ENCODE measurements at regions of chr10 and their contacts with region 1.

Region 1: GRCh38 chr10:102503281-102504220 is at the start of gene SUFU:
- DNase-seq: peak; percentile 99
- ATAC-seq: peak; percentile 74
- H3K4me3 Mint-ChIP-seq: no peak within 1 kb of the TSS
- H3K27ac Mint-ChIP-seq: peak within 1 kb of the TSS; percentile 83
- H3K4me1 Mint-ChIP-seq: peaks cover 29% of the 10 kb centered on the region
- H3K27me3 Mint-ChIP-seq: no peaks in the 10 kb centered on the region
- total RNA-seq, gene SUFU: 10.6 to 12.0 TPM

Region 2: DNA sequence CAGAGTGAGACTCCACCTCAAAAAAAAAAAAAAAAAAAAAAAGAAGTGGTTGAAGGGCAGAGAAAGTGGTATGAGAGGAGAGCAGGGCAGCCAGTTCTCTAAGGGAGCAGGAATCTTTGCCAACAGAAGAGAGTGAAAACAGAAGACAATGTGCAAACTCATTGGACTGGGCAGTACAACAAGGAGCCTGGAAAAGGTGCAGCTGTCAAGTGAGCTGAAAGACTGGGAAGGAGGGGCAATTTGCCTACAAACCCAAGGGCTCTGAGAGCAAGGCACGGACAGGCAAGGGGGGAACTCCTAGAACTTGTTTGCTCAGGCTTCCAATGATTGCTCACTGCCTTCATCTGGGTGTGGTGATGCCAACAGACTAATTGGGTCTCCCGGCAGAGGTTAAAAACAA is 10.6 kb before region 1 on chr10:
- CTCF ChIA-PET with region 1: no interaction called
- POLR2A ChIA-PET with region 1: no interaction called
- DNase-seq: no peak
- ATAC-seq: no peak
- H3K4me3 Mint-ChIP-seq: no peak overlapping the region
- H3K27ac Mint-ChIP-seq: peak overlapping the region; percentile 47
- H3K4me1 Mint-ChIP-seq: peaks cover 11% of the 10 kb centered on the region
- H3K27me3 Mint-ChIP-seq: no peaks in the 10 kb centered on the region

Region 3: GRCh38 chr10:102523250-102524029 is 19.9 kb after region 1 on chr10:
- CTCF ChIA-PET with region 1: interaction called, 11 read pairs
- POLR2A ChIA-PET with region 1: interaction called, 3 read pairs
- DNase-seq: no peak
- ATAC-seq: no peak
- H3K4me3 Mint-ChIP-seq: no peak overlapping the region
- H3K27ac Mint-ChIP-seq: no peak overlapping the region
- H3K4me1 Mint-ChIP-seq: peaks cover 9% of the 10 kb centered on the region
- H3K27me3 Mint-ChIP-seq: no peaks in the 10 kb centered on the region

Region 4: DNA sequence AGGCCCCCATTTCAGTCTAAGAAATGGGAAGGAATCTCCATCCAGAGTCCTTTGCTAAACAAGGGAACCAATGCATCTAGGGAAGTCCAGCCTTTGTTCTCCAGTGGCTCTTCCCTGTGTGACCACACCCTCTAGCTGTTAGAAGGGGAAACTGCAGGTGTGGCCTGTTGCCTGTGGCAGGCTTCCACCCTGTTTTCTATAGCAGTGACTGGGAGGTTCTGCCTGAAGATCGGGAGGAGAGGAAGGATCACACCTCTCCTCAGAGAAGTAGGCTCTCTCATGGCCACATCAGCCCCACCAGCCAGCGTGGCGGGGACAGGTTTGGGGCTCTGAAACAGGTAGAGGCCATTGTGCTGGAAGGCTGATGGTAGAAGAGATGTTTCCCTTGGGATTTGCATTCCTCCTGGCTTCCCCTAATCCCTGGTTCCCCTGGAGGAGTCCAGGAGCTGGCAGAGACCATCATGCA is 93.0 kb after region 1 on chr10:
- CTCF ChIA-PET with region 1: interaction called, 18 read pairs
- POLR2A ChIA-PET with region 1: no interaction called
- DNase-seq: peak; percentile 55
- ATAC-seq: peak; percentile 86
- H3K4me3 Mint-ChIP-seq: no peak overlapping the region
- H3K27ac Mint-ChIP-seq: no peak overlapping the region
- H3K4me1 Mint-ChIP-seq: peaks cover 4% of the 10 kb centered on the region
- H3K27me3 Mint-ChIP-seq: no peaks in the 10 kb centered on the region